PC-3 (cell line): ENCODE measurements at regions of chr10 and their contacts with region 1.

Region 1: DNA sequence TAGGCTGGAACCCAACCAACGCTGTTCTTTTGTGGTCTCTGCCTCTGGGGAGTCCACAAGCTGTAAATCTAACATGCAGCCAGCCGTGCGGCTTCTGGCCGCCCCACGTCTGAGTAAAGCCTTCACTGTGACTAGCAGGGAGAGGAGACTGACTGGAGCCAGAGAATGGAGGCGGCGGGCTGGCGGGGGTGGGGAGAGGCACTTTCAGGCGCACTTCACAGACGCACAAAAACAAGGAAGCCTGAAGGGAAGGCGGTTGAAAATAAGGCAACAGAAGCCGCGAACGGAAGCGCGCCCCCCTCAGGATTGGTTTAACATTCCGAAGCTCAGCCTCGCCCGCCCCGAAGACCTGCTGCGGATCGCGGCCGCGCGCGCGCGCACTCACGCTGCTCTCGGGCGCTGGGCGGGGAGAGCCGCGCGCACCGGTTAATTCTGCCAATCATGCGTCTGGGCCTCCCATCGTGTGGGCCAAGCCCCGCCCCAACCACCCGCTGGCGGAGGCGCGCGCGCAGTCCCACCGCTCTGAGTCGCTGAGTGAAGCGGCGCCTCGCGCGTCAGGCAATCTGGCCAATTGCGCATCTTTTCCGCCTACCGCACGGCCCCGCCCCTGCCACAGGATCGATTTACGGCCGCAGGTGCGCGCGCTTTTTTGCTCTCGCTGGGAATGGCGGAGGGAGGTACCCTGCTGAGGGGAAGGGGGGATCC is at the start of gene SFR1:
- DNase-seq: peak; percentile 96
- ATAC-seq: peak; percentile 71
- H3K4me3 ChIP-seq: peak within 1 kb of the TSS; percentile 91
- H3K27ac ChIP-seq: peak within 1 kb of the TSS; percentile 99
- H3K4me1 ChIP-seq: peaks cover 48% of the 10 kb centered on the region
- H3K27me3 ChIP-seq: no peaks in the 10 kb centered on the region
- CTCF ChIP-seq: peak; percentile 60
- total RNA-seq, gene SFR1: 2.9 and 4.7 TPM in 2 replicates

Region 2: GRCh38 chr10:103859161-103860086 is 262.2 kb before region 1 on chr10:
- CTCF ChIA-PET with region 1: no interaction called
- POLR2A ChIA-PET with region 1: interaction called, 16 read pairs
- intact Hi-C with region 1: no loop called
- DNase-seq: peak; percentile 75
- ATAC-seq: peak; percentile 61
- H3K4me3 ChIP-seq: no peak overlapping the region
- H3K27ac ChIP-seq: no peak overlapping the region
- H3K4me1 ChIP-seq: peaks cover 20% of the 10 kb centered on the region
- H3K27me3 ChIP-seq: no peaks in the 10 kb centered on the region
- CTCF ChIP-seq: peak; percentile 70

Region 3: GRCh38 chr10:103966671-103967447 is 154.8 kb before region 1 on chr10 and contains the start of gene SLK:
- CTCF ChIA-PET with region 1: no interaction called
- POLR2A ChIA-PET with region 1: no interaction called
- intact Hi-C with region 1: loop called (anchors 5 kb)
- DNase-seq: peak; percentile 80
- ATAC-seq: peak; percentile 65
- H3K4me3 ChIP-seq: peak within 1 kb of the TSS; percentile 89
- H3K27ac ChIP-seq: peak within 1 kb of the TSS; percentile 48
- H3K4me1 ChIP-seq: peaks cover 20% of the 10 kb centered on the region
- H3K27me3 ChIP-seq: no peaks in the 10 kb centered on the region
- CTCF ChIP-seq: no peak
- total RNA-seq, gene SLK: 17.3 and 20.2 TPM in 2 replicates

Region 4: DNA sequence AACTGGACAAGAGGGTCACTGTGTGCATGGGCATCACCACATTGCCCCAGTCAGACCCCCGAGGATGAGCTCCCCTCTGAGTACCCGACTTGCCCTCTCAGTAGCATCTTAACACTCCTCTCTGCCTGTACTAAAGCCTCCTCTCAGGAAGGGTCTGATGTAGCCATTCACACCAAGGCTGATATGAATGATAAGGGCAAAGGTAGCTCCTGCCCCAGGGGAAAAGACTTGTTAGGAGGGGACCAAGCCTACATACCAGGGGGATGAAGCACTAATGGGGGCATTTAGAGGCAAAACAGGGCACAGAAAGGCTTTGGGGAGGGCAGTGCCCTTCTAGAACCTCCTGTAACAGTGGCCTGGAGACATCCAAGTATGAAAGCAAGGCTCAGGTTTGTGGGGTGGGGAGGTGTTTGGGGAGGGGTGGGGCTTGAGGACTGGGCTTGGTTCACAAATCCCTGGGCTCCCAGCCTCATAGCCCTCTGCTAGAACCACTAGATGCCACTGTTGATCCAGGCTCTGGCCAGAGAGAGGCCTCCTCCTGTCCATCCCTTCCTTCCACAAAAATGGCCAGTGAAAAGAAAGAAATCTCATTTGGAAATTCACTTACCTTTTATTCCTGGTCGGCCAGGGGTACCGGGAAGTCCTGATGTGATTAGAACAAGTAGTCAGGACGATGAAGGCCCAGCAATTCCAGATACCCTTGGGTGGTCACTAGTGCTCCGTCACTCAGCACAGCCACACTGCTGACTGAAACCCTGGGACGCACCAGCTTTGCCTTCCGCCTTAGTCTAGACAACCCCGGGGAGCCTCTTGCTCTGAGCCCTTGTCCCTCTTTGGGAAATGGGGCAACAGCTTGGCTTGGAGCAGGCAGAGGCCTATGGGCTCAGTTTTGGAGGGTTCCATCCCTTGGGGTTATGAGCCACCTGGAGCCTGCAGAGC is 76.3 kb before region 1 on chr10:
- CTCF ChIA-PET with region 1: interaction called, 8 read pairs
- POLR2A ChIA-PET with region 1: interaction called, 11 read pairs
- intact Hi-C with region 1: loop called (anchors 1 kb)
- DNase-seq: peak; percentile 80
- ATAC-seq: peak; percentile 87
- H3K4me3 ChIP-seq: no peak overlapping the region
- H3K27ac ChIP-seq: no peak overlapping the region
- H3K4me1 ChIP-seq: peaks cover 18% of the 10 kb centered on the region
- H3K27me3 ChIP-seq: no peaks in the 10 kb centered on the region
- CTCF ChIP-seq: peak; percentile 70

Region 5: DNA sequence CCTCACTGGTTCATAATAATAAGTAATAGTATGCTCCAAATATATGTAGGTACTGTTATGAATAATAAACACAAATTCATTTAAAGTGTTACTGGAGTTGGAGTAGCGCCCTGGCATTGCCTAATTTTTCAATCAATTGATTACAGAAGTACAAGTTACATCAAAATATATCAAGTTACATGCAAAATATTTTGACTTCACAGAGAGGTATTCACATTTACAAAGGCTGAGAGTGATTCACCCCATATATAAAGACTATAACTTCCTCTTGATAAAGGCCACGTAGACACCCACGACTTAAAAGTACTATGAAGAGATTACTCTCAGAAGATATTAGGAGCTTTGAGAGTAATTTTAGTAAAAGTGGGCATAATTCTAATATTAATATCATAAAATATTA is 22.4 kb before region 1 on chr10:
- CTCF ChIA-PET with region 1: no interaction called
- POLR2A ChIA-PET with region 1: no interaction called
- intact Hi-C with region 1: loop called (anchors 2 kb)
- DNase-seq: peak; percentile 57
- ATAC-seq: peak; percentile 85
- H3K4me3 ChIP-seq: no peak overlapping the region
- H3K27ac ChIP-seq: no peak overlapping the region
- H3K4me1 ChIP-seq: peaks cover 17% of the 10 kb centered on the region
- H3K27me3 ChIP-seq: no peaks in the 10 kb centered on the region
- CTCF ChIP-seq: no peak

Region 6: DNA sequence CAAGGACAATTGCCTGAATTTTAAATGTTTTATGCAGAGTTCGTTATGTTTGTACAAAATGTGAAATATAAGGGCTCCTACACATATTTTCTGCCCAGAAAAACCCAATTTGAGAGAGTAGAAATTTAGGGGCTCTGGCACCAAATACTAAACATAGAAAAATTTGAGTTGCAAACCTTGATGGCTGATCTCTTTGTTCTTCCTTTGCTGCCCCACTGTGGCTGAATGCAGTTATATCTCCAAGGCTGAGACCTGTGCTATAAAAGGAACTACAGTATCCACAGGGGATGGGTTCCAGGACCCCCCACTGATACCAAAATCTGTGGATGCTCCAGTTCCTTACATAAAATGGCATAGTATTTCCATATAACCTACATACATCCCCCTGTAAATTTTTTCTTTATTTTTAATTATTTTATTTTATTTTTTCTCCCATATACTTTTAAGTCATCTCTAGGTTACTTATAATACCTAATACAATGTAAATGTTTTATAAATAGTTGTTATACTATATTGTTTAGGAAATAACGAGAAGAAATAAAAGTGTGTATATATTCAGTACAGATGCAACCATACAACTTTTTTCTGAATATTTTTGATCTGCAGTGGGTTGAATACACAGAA is 88.0 kb after region 1 on chr10:
- CTCF ChIA-PET with region 1: no interaction called
- POLR2A ChIA-PET with region 1: no interaction called
- intact Hi-C with region 1: loop called (anchors 1 kb)
- DNase-seq: peak; percentile 55
- ATAC-seq: peak; percentile 49; the same call in 1 of the 2 replicates
- H3K4me3 ChIP-seq: no peak overlapping the region
- H3K27ac ChIP-seq: no peak overlapping the region
- H3K4me1 ChIP-seq: no peaks in the 10 kb centered on the region
- H3K27me3 ChIP-seq: no peaks in the 10 kb centered on the region
- CTCF ChIP-seq: peak; percentile 66